CD4-positive, alpha-beta T cell (primary cell): ENCODE measurements at regions of chr2 and their contacts with region 1.

Region 1: DNA sequence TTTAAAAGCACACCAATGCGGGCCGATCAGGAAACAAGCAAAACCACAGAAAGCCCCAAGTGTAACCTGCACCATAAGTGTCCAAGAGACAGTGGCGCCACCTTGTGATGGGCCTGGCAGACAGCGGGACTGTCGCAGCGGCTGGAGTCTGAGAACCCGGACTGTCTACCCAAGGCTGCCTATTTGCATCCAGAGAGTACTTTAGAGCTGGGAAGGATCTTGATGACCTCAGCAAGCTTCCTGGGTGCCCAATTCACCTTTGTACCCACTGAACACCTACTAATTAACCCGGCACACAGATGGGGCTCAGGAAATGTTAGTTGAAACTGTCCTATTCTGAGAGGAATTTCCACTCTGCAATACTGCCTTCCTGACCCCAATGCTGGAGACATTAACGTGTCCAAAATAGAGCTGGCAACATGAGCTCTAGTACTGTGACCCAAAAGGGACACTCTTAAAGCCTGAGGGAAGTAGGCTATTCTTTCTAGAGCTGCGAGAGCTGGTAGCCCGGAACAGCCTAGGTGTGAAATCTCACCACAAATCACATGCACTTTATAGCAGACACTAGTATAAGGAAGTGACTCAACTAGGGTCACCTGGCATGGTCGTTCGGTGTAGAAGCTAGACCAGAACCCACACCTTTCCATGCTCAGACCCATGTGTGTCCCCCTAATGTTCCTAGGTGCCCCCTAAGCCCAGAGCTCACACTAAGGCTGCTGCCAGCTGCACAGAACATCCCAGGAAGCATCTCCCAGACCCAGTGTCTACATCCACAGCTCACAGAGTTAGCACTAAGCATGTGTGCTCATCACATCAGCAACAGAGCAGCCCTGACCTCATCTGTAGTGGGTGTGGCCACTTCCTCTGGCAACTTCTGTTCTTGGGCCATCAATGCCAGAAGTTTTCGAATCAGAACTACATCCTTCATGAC is 25.4 kb downstream of the POLR1A start:
- DNase-seq: peak; percentile 73 to 90 (median 82)
- ATAC-seq: peak; percentile 81
- H3K4me3 ChIP-seq: no peak overlapping the region
- H3K4me3 Mint-ChIP-seq: peak overlapping the region; percentile 31
- H3K27ac ChIP-seq: peak overlapping the region; percentile 16 to 56
- H3K27ac Mint-ChIP-seq: peak overlapping the region; percentile 87
- H3K4me1 ChIP-seq: peaks cover 26% of the 10 kb centered on the region
- H3K4me1 Mint-ChIP-seq: peaks cover 26% of the 10 kb centered on the region
- H3K27me3 ChIP-seq: no peaks in the 10 kb centered on the region
- H3K27me3 Mint-ChIP-seq: no peaks in the 10 kb centered on the region
- CTCF ChIP-seq: peak; percentile 78

Region 2: GRCh38 chr2:85728883-85729824 is 351.1 kb before region 1 on chr2:
- CTCF ChIA-PET with region 1: interaction called, 3 read pairs
- POLR2A ChIA-PET with region 1: interaction called, 4 read pairs
- intact Hi-C with region 1: loop called (anchors 2 kb)
- DNase-seq: peak; percentile 44 to 80 (median 64)
- ATAC-seq: peak; percentile 71
- H3K4me3 ChIP-seq: no peak overlapping the region
- H3K4me3 Mint-ChIP-seq: no peak overlapping the region
- H3K27ac ChIP-seq: no peak overlapping the region
- H3K27ac Mint-ChIP-seq: no peak overlapping the region
- H3K4me1 ChIP-seq: peaks cover 7% of the 10 kb centered on the region
- H3K4me1 Mint-ChIP-seq: no peaks in the 10 kb centered on the region
- H3K27me3 ChIP-seq: peaks cover 3 to 5% of the 10 kb centered on the region in 2 experiments
- H3K27me3 Mint-ChIP-seq: peaks cover 8% of the 10 kb centered on the region
- CTCF ChIP-seq: peak; percentile 83

Region 3: DNA sequence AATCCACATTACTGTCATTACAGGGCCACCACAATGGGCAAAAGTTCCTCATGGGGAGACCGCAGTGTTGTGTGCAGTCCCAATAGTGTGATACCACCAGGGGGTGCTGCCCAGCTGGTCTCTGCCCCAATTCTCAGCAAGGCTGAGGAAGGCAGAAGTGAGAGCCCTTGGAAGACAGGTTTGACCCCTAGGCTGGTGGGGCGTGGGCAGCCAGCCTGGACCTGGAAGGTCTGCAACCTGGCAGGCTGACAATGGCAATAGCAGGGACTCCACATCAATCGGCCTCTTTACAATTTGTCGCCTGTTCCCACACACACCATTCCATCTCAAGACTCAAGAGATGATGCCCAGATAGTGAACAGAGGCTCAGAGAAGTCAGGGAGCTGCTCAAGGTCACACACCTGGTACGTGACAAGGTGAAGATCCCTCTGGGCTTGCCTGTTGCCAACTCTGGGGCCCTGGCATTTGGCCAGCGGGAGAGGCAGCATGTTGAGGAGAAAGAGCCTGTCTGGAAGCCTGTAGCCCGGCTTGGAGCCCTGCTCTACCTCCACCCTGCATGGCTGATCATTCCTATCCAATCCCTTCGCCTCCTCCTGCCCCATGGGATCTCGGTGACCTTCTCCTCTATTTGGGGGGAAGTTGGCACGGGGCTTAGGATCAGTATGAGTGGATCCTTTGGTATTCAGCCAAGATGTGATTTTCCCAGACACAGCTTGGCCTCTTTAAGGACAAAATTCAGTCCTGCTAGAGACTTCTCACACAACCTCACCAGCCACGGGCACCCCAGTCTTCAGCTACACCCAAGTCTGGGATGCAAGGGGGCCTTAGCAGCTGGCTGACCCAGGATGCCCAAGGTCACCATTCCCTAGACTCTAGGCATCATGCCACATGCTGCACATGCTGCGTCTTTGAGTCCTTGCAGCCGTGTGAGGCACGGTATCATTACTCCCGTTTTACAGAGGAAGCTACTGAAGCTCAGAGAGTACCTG is 329.4 kb before region 1 on chr2:
- CTCF ChIA-PET with region 1: no interaction called
- POLR2A ChIA-PET with region 1: no interaction called
- intact Hi-C with region 1: loop called (anchors 1 to 5 kb)
- DNase-seq: peak; percentile 16 to 73 (median 32)
- ATAC-seq: peak; percentile 57
- H3K4me3 ChIP-seq: no peak overlapping the region
- H3K4me3 Mint-ChIP-seq: no peak overlapping the region
- H3K27ac ChIP-seq: no peak overlapping the region
- H3K27ac Mint-ChIP-seq: no peak overlapping the region
- H3K4me1 ChIP-seq: peaks cover 24% of the 10 kb centered on the region
- H3K4me1 Mint-ChIP-seq: peaks cover 20% of the 10 kb centered on the region
- H3K27me3 ChIP-seq: peaks cover 41 to 59% of the 10 kb centered on the region in 2 experiments
- H3K27me3 Mint-ChIP-seq: peaks cover 75% of the 10 kb centered on the region
- CTCF ChIP-seq: peak; percentile 39

Region 4: DNA sequence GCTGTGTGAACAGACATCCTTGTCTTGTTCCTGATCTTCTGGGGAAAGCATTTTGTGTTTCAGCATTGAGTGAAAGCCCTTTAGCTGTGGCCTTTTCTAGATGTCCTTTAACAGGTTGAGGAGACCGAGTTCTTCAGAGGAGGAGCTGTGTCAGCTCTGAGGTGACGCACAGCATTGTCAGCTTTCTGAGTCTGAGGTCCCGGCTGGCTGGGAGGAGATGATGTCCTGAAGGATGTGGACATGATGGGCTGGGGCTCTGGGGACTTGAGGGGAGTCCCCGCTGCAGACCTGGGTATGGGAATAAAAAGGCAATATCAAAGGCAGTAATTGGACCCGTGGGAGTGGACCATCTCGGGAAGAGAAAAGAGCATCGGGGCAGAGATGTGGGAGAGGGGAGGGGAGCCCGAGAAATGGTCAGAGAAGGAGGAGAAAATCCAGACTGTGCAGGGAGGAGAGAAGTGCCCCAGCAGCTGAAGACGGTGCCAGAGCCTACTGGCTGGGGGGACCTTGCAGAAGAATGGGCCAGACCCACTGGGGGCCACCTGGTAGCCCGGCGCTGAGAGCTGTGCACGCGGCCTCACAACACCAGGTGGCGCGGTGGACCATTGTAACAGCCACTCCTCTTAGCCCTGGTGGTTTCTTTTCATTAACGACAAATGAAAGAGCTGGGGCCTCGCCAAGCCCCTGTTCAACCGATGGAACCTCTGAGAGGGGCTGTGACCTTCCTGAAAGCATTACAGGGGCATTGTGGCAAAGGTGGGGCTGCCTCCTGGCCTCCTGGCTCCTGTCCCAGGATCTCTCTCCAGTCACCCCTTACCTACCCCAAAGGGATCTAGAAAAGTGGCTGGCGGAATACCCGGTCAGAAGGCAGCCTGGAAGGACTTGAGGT is 253.0 kb before region 1 on chr2:
- CTCF ChIA-PET with region 1: interaction called, 94 read pairs
- POLR2A ChIA-PET with region 1: interaction called, 8 read pairs
- intact Hi-C with region 1: loop called (anchors 1 kb)
- DNase-seq: peak; percentile 74 to 90 (median 81)
- ATAC-seq: peak; percentile 100
- H3K4me3 ChIP-seq: no peak overlapping the region
- H3K4me3 Mint-ChIP-seq: no peak overlapping the region
- H3K27ac ChIP-seq: peak overlapping the region in 1 of 2 donors; percentile 5
- H3K27ac Mint-ChIP-seq: peak overlapping the region; percentile 49
- H3K4me1 ChIP-seq: peaks cover 10% of the 10 kb centered on the region
- H3K4me1 Mint-ChIP-seq: peaks cover 22% of the 10 kb centered on the region
- H3K27me3 ChIP-seq: no peaks in the 10 kb centered on the region
- H3K27me3 Mint-ChIP-seq: peaks cover 3% of the 10 kb centered on the region
- CTCF ChIP-seq: peak; percentile 92

Region 5: DNA sequence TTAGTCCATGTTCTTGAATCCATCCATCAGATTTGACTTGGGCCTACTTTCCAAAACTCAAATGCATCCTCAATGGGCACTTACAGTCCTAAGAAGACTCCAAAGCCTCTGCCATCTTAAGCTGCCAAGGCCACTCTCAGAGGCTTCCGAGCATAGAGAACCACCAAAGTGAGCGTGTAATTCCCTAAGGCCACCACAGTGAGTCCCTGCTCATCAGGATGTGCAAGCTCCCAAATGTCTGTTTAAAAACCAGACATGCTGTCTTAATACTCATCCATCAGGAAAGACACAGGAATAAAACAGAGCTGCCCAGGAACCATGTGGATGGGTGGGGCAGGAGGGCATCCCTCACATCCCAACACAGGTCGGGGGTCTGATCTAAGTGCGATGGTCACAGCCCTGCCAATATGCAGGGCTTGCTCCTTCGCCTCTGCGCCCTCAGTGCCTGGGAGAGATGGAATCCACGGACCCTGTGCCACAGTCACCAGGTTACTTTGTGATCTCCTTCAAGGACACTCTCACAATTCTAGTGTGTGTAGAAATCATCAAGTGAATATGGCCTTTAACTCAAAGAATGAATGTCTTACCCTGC is 54.9 kb before region 1 on chr2:
- CTCF ChIA-PET with region 1: interaction called, 10 read pairs
- POLR2A ChIA-PET with region 1: no interaction called
- intact Hi-C with region 1: loop called in 1 of 2 experiments (anchors 5 kb)
- DNase-seq: no peak
- ATAC-seq: no peak
- H3K4me3 ChIP-seq: no peak overlapping the region
- H3K4me3 Mint-ChIP-seq: no peak overlapping the region
- H3K27ac ChIP-seq: no peak overlapping the region
- H3K27ac Mint-ChIP-seq: peak overlapping the region; percentile 51
- H3K4me1 ChIP-seq: peaks cover 2% of the 10 kb centered on the region
- H3K4me1 Mint-ChIP-seq: no peaks in the 10 kb centered on the region
- H3K27me3 ChIP-seq: no peaks in the 10 kb centered on the region
- H3K27me3 Mint-ChIP-seq: no peaks in the 10 kb centered on the region
- CTCF ChIP-seq: no peak

Region 6: DNA sequence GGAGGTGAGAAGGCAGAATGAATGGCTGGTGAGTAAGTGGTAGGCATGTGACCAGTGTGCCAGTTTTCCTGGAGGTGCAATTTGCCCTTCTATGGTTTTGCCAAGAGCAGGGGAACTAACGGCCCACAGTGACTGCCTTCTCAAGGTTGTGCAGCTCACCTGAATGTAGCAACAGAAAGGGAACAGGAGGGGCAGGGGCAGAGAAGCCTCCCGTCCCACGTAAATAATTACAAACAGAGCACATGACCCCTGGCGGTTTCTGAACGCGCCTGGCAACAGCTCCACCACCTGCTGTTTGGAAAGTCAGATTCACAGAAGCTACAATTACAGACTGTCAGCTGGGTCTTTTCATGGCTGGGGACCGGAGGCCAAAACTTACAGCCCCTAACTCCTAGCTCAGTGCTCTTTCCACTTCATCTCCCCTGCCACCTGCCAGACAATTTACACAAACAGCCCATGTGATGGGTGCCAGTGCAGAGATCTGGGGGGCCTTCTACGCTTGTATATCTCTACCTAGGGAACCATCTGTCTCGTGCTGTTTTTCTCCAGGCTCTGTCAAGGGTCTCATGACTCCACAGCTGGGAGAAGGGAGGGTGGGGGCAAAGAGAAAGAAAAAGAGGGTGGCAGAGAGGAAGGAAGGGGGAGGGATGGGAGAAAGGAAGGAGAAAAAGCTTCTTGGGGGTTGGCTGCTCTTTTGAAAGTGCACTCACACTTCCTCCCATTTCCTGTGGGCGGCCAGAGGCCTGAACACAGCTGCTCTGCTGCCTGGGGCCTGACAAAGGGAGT is 44.2 kb before region 1 on chr2:
- CTCF ChIA-PET with region 1: interaction called, 23 read pairs
- POLR2A ChIA-PET with region 1: interaction called, 5 read pairs
- intact Hi-C with region 1: loop called in 1 of 2 experiments (anchors 5 kb)
- DNase-seq: peak; percentile 47 to 91 (median 68)
- ATAC-seq: peak; percentile 53
- H3K4me3 ChIP-seq: peak overlapping the region; percentile 29
- H3K4me3 Mint-ChIP-seq: peak overlapping the region; percentile 78
- H3K27ac ChIP-seq: peak overlapping the region; percentile 88 to 92
- H3K27ac Mint-ChIP-seq: peak overlapping the region; percentile 97
- H3K4me1 ChIP-seq: peaks cover 92% of the 10 kb centered on the region
- H3K4me1 Mint-ChIP-seq: peaks cover 72% of the 10 kb centered on the region
- H3K27me3 ChIP-seq: no peaks in the 10 kb centered on the region
- H3K27me3 Mint-ChIP-seq: peaks cover 3% of the 10 kb centered on the region
- CTCF ChIP-seq: peak; percentile 46